ENCODE measurements at regions of chr3 and their contacts with region 1.

Region 1: GRCh38 chr3:113606539-113607218 is 74.3 kb downstream of the SIDT1 start:
- DNase-seq: no peak
- H3K4me3 ChIP-seq: no peak overlapping the region
- H3K27ac ChIP-seq: no peak overlapping the region
- H3K4me1 ChIP-seq: no peaks in the 10 kb centered on the region
- H3K27me3 ChIP-seq: peaks cover 27% of the 10 kb centered on the region

Region 2: GRCh38 chr3:113035387-113035982 is 571.2 kb before region 1 on chr3:
- in situ Hi-C with region 1: loop called (anchors 25 kb)
- DNase-seq: peak; percentile 78
- H3K4me3 ChIP-seq: no peak overlapping the region
- H3K27ac ChIP-seq: no peak overlapping the region
- H3K4me1 ChIP-seq: no peaks in the 10 kb centered on the region
- H3K27me3 ChIP-seq: no peaks in the 10 kb centered on the region

Region 3: GRCh38 chr3:113063126-113063909 is 543.4 kb before region 1 on chr3:
- in situ Hi-C with region 1: no loop called
- DNase-seq: peak; percentile 43
- H3K4me3 ChIP-seq: no peak overlapping the region
- H3K27ac ChIP-seq: no peak overlapping the region
- H3K4me1 ChIP-seq: no peaks in the 10 kb centered on the region
- H3K27me3 ChIP-seq: no peaks in the 10 kb centered on the region

Measured in GM23248 (cell line).